Left lung (tissue), 14 donors: ENCODE measurements at regions of chr5 and their contacts with region 1.

Region 1: DNA sequence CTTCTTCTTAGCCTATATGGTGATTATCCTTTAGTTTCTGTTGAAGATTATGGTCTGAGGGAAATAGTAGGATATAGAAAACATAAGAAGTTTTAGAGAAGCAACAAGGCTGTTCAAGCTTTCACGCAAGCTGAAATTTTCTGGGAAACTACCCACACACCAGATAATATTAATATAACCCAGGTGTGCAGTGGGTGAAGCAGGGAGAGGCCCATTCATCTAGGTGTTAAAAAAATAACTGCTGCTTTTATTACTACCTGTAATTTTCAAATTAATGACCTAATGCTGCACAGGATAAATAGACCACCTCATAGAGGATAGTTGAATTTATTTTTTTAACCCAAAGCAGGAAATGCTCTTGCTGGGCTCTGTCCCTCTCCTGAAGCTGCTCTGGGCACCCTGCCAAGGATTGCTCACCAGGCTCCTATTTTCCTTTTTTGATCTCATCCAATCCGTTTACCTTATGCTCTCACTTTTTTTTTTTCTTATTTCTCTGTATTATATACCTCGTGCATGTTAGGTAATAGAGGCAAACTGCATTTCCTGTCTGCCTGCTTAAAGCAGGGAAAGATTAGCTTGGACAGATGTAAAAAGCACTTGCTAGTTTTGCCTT is 124.3 kb upstream of the SLC12A2 start:
- DNase-seq: peak in 3 of 4 donors; percentile 22 to 64 (median 64)
- ATAC-seq: peak; percentile 56
- H3K4me3 ChIP-seq: no peak overlapping the region
- H3K27ac ChIP-seq: peak overlapping the region; percentile 50 to 51
- H3K4me1 ChIP-seq: peaks cover 12 to 34% of the 10 kb centered on the region in 2 donors
- H3K27me3 ChIP-seq: no peaks in the 10 kb centered on the region
- CTCF ChIP-seq: no peak

Region 2: GRCh38 chr5:127863610-127864395 is 95.5 kb before region 1 on chr5:
- intact Hi-C with region 1: no loop called
- DNase-seq: no peak
- ATAC-seq: peak; percentile 20
- H3K4me3 ChIP-seq: no peak overlapping the region
- H3K27ac ChIP-seq: peak overlapping the region in 1 of 2 donors; percentile 50
- H3K4me1 ChIP-seq: peaks cover 0 to 12% of the 10 kb centered on the region in 2 donors
- H3K27me3 ChIP-seq: no peaks in the 10 kb centered on the region
- CTCF ChIP-seq: no peak

Region 3: GRCh38 chr5:127875235-127876021 is 83.8 kb before region 1 on chr5:
- intact Hi-C with region 1: loop called in 1 of 2 experiments (anchors 10 kb)
- DNase-seq: peak in 3 of 4 donors; percentile 36 to 70 (median 56)
- ATAC-seq: peak; percentile 78
- H3K4me3 ChIP-seq: no peak overlapping the region
- H3K27ac ChIP-seq: no peak overlapping the region
- H3K4me1 ChIP-seq: peaks cover 14 to 19% of the 10 kb centered on the region in 2 donors
- H3K27me3 ChIP-seq: no peaks in the 10 kb centered on the region
- CTCF ChIP-seq: no peak